Activated CD4-positive, alpha-beta memory T cell treated with anti-CD3 and anti-CD28 coated beads for 36 hours (primary cell): ENCODE measurements at regions of chr20 and their contacts with region 1.

Region 1: DNA sequence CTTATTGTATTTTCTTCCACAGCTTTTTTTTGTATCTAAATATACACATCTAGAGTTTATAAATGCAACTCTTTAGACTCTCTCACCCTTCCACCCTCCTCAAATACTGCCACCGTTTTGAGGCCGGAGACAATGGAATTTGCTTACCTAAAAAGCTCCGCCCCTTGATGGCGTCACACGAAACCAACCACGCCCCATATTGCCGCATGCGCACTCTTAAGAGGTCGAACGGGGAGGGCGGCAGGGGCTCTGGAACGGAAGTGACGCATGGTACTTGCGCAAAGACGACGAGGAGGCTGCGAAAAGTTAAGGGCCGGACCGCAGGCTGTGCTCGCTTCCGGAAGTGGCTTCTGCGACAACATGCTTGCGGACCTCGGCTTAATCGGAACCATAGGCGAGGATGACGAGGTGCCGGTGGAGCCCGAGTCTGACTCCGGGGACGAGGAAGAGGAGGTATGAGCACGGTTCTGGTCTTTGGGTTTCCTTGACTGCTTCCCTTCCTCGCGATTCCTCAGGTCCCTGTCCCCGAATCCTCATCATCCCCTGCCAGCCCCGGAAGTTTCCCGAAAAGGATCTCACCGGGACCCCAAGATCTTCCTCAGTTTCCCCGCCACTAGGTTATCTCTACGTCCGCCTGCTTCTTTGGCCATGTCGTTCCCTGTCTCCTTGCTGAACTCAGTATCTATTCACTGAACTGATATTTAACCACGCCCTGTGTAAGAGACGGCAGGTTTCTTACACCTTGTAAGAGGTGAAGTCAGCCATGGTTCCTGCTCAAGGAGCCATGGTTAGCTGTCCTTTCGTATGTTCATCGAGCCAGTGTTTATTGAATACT is at the start of gene DDX27:
- DNase-seq: peak; percentile 99
- H3K4me3 Mint-ChIP-seq: peak within 1 kb of the TSS; percentile 88
- H3K27ac Mint-ChIP-seq: peak within 1 kb of the TSS; percentile 89
- H3K4me1 Mint-ChIP-seq: peaks cover 29% of the 10 kb centered on the region
- H3K27me3 Mint-ChIP-seq: no peaks in the 10 kb centered on the region
- total RNA-seq, gene DDX27: 42.8 to 43.5 TPM

Region 2: DNA sequence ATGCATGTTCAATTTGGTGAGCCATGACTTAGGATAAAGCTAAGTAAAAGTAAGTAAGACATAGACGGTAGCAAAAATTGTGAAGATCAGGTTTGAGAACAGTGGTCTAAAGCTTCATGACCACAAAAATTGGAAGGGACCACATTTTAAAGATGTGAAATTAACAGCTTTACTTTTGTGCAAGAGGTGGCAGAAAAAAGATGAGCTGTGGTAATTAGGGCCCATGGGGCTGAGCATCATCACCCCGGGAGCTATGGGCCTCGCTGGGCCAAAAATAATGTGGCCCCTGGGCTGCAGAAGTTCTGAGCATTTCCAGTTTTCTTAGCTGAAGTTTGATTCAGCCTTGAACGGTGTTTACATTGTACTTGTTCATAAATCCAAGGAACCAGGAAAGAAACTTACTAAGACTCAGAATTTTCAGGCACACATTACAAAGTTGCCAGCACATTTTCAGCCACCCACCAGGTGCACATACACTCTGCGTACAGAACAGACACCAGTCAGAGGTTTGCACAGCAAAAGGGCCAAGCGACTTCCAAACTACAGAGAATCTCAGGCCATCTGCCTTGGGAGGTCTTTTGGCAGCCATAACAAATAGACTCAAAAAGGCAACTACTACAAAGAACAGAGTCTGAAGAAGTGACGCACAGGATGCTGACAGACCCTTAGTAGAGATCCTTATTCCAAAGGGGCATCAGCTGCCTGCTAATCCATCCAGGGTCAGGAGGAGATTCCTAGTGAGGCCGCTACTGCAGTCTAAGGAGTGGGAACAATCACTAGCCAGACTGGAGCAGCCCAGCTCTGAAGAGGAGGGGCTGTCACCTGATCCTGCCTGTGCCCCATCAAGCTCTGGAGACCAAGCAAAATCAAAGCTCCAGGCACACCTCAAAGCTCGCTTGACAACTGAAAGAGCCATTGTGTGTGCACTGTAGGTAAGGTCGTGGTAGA is 115.4 kb before region 1 on chr20:
- CTCF ChIA-PET with region 1: interaction called, 10 read pairs
- POLR2A ChIA-PET with region 1: no interaction called
- intact Hi-C with region 1: no loop called
- DNase-seq: no peak
- H3K4me3 Mint-ChIP-seq: no peak overlapping the region
- H3K27ac Mint-ChIP-seq: no peak overlapping the region
- H3K4me1 Mint-ChIP-seq: peaks cover 10% of the 10 kb centered on the region
- H3K27me3 Mint-ChIP-seq: no peaks in the 10 kb centered on the region

Region 3: GRCh38 chr20:49132995-49133478 is 86.3 kb before region 1 on chr20:
- CTCF ChIA-PET with region 1: interaction called, 237 read pairs
- POLR2A ChIA-PET with region 1: no interaction called
- intact Hi-C with region 1: loop called (anchors 1 kb)
- DNase-seq: no peak
- H3K4me3 Mint-ChIP-seq: no peak overlapping the region
- H3K27ac Mint-ChIP-seq: no peak overlapping the region
- H3K4me1 Mint-ChIP-seq: no peaks in the 10 kb centered on the region
- H3K27me3 Mint-ChIP-seq: no peaks in the 10 kb centered on the region

Region 4: DNA sequence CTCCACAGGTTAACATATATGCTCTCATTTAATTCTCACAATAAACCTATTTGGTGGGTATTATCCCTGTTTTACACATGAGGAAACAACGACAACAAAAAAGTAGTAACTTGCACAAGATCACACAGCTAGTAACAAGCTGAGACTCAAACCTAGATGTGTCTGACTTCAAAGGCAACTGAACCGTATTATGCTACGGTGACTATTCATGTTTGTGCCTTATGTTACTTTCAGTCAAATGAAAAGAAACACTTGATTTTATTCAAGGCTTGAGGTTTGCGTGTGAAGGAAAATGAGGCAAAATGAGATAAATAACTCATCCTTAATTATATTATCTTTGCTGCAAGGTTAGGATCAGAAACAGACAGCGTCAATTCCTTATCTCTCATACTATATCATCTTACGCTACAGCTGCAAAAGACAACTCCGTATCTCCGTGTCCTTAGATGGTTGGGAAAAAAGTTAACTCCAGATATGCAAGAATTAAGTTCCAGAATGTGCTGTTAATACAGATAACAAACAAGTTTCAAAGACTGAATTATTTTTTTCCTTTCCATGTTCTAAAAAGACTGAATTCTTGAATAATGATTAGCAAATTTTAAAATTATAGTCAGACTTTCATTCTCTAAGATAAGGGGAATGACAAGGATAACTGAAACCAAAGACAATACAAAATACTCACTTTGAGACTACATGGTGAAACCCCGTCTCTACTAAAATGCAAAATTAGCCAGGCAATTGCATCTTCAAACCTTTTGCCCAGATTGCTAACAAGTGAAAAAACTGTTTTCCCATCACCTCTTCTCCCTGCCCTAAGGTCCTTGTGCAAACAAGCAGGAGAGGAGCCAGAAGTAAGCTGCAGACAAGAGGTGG is 59.0 kb before region 1 on chr20:
- CTCF ChIA-PET with region 1: interaction called, 29 read pairs
- POLR2A ChIA-PET with region 1: interaction called, 10 read pairs
- intact Hi-C with region 1: loop called (anchors 1 kb)
- DNase-seq: no peak
- H3K4me3 Mint-ChIP-seq: no peak overlapping the region
- H3K27ac Mint-ChIP-seq: peak overlapping the region; percentile 52
- H3K4me1 Mint-ChIP-seq: peaks cover 50% of the 10 kb centered on the region
- H3K27me3 Mint-ChIP-seq: no peaks in the 10 kb centered on the region

Region 5: GRCh38 chr20:49179368-49180277 is 39.7 kb before region 1 on chr20:
- CTCF ChIA-PET with region 1: interaction called, 33 read pairs
- POLR2A ChIA-PET with region 1: no interaction called
- intact Hi-C with region 1: no loop called
- DNase-seq: no peak
- H3K4me3 Mint-ChIP-seq: no peak overlapping the region
- H3K27ac Mint-ChIP-seq: no peak overlapping the region
- H3K4me1 Mint-ChIP-seq: peaks cover 56% of the 10 kb centered on the region
- H3K27me3 Mint-ChIP-seq: no peaks in the 10 kb centered on the region

Region 6: DNA sequence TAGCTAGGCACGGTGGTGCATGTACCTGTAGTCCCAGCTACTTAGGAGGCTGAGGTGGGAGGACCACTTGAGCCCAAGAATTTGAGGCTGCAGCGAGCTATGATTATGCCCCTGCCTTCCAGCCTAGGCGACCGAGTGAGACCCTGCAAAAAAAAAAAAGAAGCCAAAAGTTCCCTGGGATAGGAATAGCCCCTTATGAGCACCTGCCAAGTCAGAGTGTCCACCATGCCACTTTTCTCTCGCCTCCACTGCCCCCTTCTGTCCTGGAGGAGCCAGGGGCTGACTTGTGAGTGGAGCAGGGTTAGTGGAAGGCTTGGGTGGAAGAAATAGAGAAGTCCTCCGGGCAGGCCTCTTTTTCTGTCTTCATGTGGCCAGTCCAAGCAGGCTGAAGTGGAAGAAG is 12.2 kb before region 1 on chr20:
- CTCF ChIA-PET with region 1: interaction called, 22 read pairs
- POLR2A ChIA-PET with region 1: no interaction called
- intact Hi-C with region 1: no loop called
- DNase-seq: peak; percentile 46
- H3K4me3 Mint-ChIP-seq: no peak overlapping the region
- H3K27ac Mint-ChIP-seq: no peak overlapping the region
- H3K4me1 Mint-ChIP-seq: no peaks in the 10 kb centered on the region
- H3K27me3 Mint-ChIP-seq: no peaks in the 10 kb centered on the region